ENCODE measurements at regions of chr9 and their contacts with region 1.

Region 1: GRCh38 chr9:137456061-137456831 is 2.9 kb downstream of the NSMF start:
- DNase-seq: no peak
- ATAC-seq: no peak
- H3K4me3 ChIP-seq: no peak overlapping the region
- H3K27ac ChIP-seq: no peak overlapping the region
- H3K4me1 ChIP-seq: peaks cover 30% of the 10 kb centered on the region
- H3K27me3 ChIP-seq: no peaks in the 10 kb centered on the region
- CTCF ChIP-seq: no peak

Region 2: DNA sequence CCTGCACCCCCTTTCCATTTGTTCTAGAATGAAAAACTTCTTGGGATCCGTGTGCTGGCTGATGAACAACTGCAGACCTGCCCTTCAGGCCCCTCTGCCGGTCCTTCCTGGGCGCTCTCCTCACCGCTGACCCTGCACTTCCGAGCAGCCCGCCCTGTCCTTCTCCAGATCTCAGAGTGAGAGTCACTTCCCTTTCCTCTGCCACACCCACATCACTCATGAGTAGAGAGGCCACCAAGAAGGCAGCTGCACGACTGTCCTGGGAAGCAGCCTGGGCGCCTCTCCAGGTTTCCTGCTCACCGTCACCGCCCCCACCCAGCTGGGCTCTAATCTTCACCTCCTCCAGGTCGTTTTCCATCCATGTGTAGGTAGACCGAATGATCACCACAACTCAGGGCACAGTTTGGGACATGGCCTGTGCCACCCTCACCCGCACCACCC is 37.9 kb after region 1 on chr9:
- CTCF ChIA-PET with region 1: no interaction called
- POLR2A ChIA-PET with region 1: interaction called, 10 read pairs
- in situ Hi-C with region 1: no loop called
- intact Hi-C with region 1: no loop called
- DNase-seq: no peak
- ATAC-seq: no peak
- H3K4me3 ChIP-seq: no peak overlapping the region
- H3K27ac ChIP-seq: no peak overlapping the region
- H3K4me1 ChIP-seq: no peaks in the 10 kb centered on the region
- H3K27me3 ChIP-seq: no peaks in the 10 kb centered on the region
- CTCF ChIP-seq: no peak